Dorsolateral prefrontal cortex (tissue), 120 donors: ENCODE measurements at regions of chr13 and their contacts with region 1.

Region 1: GRCh38 chr13:98473135-98473787 is 103.6 kb downstream of the STK24 start:
- DNase-seq: no peak
- H3K4me3 ChIP-seq: no peak overlapping the region
- H3K27ac ChIP-seq: no peak overlapping the region
- H3K27me3 ChIP-seq: no peaks in the 10 kb centered on the region
- CTCF ChIP-seq: no peak

Region 2: GRCh38 chr13:98509271-98510155 is 36.3 kb after region 1 on chr13:
- intact Hi-C with region 1: loop called in 1 of 2 experiments (anchors 1 kb)
- DNase-seq: no peak
- H3K4me3 ChIP-seq: no peak overlapping the region
- H3K27ac ChIP-seq: peak overlapping the region in 41 of 59 donors; percentile 0 to 67 (median 35)
- H3K27me3 ChIP-seq: no peaks in the 10 kb centered on the region
- CTCF ChIP-seq: no peak